HCT116 (cell line): ENCODE measurements at regions of chr10 and their contacts with region 1.

Region 1: DNA sequence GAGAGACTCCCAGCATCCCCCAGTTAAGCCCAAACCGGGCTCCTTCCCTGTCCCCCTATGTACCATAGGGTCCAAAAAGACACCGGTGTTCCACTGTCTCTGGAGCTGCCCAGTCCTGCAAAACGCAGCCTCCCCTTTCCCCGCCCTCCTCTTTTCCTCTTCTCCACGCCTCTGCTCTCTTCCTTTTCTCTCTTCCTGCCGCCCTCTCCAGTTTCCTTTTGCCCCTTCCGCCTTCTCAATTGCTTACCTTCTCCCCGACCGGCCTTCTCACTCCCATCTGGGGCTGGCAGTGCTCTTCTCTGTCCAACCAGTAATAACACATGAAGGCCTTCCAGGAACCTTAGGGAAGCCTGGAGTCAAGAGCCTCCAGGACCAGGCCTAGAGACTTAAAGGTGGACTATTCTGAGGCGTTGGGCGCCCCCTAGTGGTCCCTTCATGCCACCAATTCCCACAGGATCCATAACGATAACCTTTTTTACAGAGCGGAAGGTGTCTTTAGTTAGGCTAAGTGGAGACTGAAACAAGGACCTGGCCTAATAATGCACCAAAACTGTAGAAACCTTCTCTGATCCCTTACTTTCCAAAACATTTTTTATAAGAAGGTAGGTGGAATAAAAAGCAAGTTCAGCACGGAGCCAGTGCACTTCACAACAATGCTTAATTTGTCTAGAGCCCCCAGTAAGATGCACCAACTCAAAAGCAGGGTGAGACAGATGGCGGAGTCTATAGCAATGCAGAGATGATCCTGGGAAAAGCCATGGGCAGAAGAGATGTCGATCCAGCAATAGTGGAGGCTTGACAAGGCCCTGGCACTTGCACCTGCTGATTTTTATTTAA is 27.2 kb upstream of the MSRB2 start:
- DNase-seq: peak; percentile 81
- ATAC-seq: peak; percentile 98
- H3K4me3 ChIP-seq: no peak overlapping the region
- H3K27ac ChIP-seq: no peak overlapping the region
- H3K4me1 ChIP-seq: peaks cover 4 to 11% of the 10 kb centered on the region in 2 experiments; a peak in 3 of 4 replicates
- H3K27me3 ChIP-seq: no peaks in the 10 kb centered on the region
- CTCF ChIP-seq: peak; percentile 64 to 93 (median 82)
- POLR2A ChIP-seq: no peak
- RAD21 ChIP-seq: peak; percentile 94

Region 2: GRCh38 chr10:21989453-21990154 is 1078.6 kb before region 1 on chr10:
- CTCF ChIA-PET with region 1: no interaction called
- POLR2A ChIA-PET with region 1: no interaction called
- RAD21 ChIA-PET with region 1: no interaction called
- intact Hi-C with region 1: loop called (anchors 1 kb)
- DNase-seq: peak; percentile 52
- ATAC-seq: peak; percentile 99
- H3K4me3 ChIP-seq: no peak overlapping the region
- H3K27ac ChIP-seq: no peak overlapping the region
- H3K4me1 ChIP-seq: no peaks in the 10 kb centered on the region
- H3K27me3 ChIP-seq: no peaks in the 10 kb centered on the region
- CTCF ChIP-seq: peak; percentile 50 to 71 (median 71); a peak in 5 of 6 replicates
- POLR2A ChIP-seq: no peak
- RAD21 ChIP-seq: peak; percentile 69

Region 3: GRCh38 chr10:22251751-22252223 is 816.4 kb before region 1 on chr10:
- CTCF ChIA-PET with region 1: no interaction called
- POLR2A ChIA-PET with region 1: no interaction called
- RAD21 ChIA-PET with region 1: no interaction called
- intact Hi-C with region 1: loop called (anchors 10 kb)
- DNase-seq: no peak
- ATAC-seq: 0 out of 2 replicates have a peak, but pooled peaks have one; percentile 20
- H3K4me3 ChIP-seq: peak overlapping the region; percentile 47 to 59
- H3K27ac ChIP-seq: peak overlapping the region; percentile 70
- H3K4me1 ChIP-seq: peaks cover 16 to 30% of the 10 kb centered on the region in 2 experiments
- H3K27me3 ChIP-seq: no peaks in the 10 kb centered on the region
- CTCF ChIP-seq: no peak
- POLR2A ChIP-seq: peak; percentile 29
- RAD21 ChIP-seq: no peak

Region 4: GRCh38 chr10:22436884-22437619 is 631.1 kb before region 1 on chr10:
- CTCF ChIA-PET with region 1: no interaction called
- POLR2A ChIA-PET with region 1: no interaction called
- RAD21 ChIA-PET with region 1: no interaction called
- intact Hi-C with region 1: loop called (anchors 10 kb)
- DNase-seq: peak; percentile 92
- ATAC-seq: peak; percentile 77
- H3K4me3 ChIP-seq: peak overlapping the region; percentile 60 to 71
- H3K27ac ChIP-seq: peak overlapping the region; percentile 91
- H3K4me1 ChIP-seq: peaks cover 25 to 55% of the 10 kb centered on the region in 2 experiments
- H3K27me3 ChIP-seq: no peaks in the 10 kb centered on the region
- CTCF ChIP-seq: no peak
- POLR2A ChIP-seq: peak; percentile 62
- RAD21 ChIP-seq: peak; percentile 16; the same call in 1 of the 2 replicates

Region 5: DNA sequence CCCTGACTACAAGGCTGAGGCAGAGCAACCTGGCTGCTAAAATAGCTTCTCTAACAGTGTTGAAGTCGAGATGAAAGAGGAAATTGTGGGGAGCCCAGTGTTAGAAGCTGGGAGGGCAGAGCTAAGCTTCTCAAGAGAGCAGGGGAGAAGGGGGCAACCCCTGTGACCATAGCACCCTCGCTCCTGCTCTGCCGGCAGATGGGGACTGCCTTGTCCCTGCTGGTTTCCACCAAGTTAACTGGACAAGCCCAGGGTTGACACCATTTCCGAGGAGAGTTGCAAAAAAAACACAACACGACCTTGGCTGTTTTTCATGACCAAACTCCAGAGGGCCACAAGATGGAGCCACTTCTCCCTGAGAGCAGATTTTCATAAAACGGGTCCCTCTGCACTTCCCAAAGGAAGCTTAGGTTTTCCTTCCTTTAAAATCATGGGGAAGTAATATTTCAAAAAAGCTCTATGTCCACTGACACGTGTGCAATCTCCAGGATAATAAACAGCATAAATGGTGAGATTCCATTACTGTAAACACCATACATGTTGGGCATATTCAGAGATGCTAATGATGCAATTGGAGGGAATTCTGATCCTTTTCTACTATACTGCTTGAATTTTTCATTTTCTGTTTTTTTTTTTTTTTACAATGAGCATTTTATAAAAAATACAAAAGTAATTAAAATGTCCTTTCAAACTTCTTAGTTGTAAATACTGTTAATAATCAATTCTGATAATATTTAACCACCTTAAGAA is 494.2 kb before region 1 on chr10:
- CTCF ChIA-PET with region 1: no interaction called
- POLR2A ChIA-PET with region 1: no interaction called
- RAD21 ChIA-PET with region 1: no interaction called
- intact Hi-C with region 1: loop called (anchors 1 kb)
- DNase-seq: peak; percentile 32
- ATAC-seq: peak; percentile 27; the same call in 1 of the 2 replicates
- H3K4me3 ChIP-seq: no peak overlapping the region
- H3K27ac ChIP-seq: no peak overlapping the region
- H3K4me1 ChIP-seq: no peaks in the 10 kb centered on the region
- H3K27me3 ChIP-seq: no peaks in the 10 kb centered on the region
- CTCF ChIP-seq: peak; percentile 45 to 68 (median 54); a peak in 5 of 6 replicates
- POLR2A ChIP-seq: no peak
- RAD21 ChIP-seq: peak; percentile 63